Mammary epithelial cell (primary cell): ENCODE measurements at regions of chr11 and their contacts with region 1.

Region 1: GRCh38 chr11:111878849-111879636 is at the starts of genes CFAP68 and FDXACB1:
- DNase-seq: peak; percentile 98
- H3K4me3 ChIP-seq: peak within 1 kb of the TSS; percentile 69 to 91 (median 73)
- H3K27ac ChIP-seq: peak within 1 kb of the TSS; percentile 99
- H3K4me1 ChIP-seq: peaks cover 8% of the 10 kb centered on the region
- H3K27me3 ChIP-seq: no peaks in the 10 kb centered on the region
- CTCF ChIP-seq: peak; percentile 90 to 95
- total RNA-seq, gene CFAP68: 12.5 to 23.7 TPM
- total RNA-seq, gene FDXACB1: 0.96 to 2.3 TPM

Region 2: DNA sequence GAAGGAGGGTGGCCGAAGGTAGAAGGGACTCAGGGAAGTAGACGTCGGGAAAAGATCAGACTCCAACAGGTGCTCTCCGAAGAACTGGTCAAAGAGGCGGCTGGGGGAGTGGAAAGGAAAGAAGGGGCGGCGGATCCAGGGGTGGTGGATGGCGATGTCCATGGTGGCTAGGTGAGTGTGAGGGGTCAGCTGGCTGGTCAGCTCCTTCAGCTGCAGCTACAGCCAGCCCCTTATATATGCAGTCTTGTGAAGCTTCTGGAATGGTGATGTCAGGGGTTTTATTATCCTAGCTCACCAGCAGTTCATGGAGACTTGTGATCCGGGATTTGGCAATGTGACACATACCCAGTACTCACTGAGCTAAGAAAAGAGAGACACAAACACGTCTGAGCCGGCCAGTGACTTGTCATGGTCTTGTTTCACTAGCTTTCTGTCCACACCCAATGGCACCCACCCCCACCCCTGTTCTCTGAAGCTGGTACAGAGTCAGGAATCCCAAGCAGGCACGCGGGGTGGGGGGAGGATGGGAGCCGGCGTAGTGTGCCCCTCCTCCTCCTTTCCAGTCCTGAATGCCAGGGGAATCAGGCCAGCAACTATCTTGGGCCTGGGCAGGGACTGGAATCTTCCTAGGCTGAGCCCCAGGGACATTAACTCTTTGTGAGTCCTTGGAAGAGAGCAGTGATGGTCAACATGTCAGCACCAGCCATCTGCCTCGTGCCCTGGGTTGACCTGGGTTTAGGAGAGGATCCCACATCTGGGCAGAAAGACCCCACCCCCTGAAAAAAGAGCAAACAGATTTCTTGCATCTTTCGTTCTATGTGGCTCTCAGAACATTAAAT is 32.7 kb after region 1 on chr11 and contains the start of gene CRYAB:
- CTCF ChIA-PET with region 1: no interaction called
- dilution Hi-C with region 1: no loop called
- in situ Hi-C with region 1: loop called in 1 of 2 experiments (anchors 5 kb)
- intact Hi-C with region 1: loop called (anchors 2 kb)
- DNase-seq: peak; percentile 93
- H3K4me3 ChIP-seq: peak within 1 kb of the TSS; percentile 3 to 56 (median 6)
- H3K27ac ChIP-seq: peak within 1 kb of the TSS; percentile 38
- H3K4me1 ChIP-seq: peaks cover 26% of the 10 kb centered on the region
- H3K27me3 ChIP-seq: no peaks in the 10 kb centered on the region
- CTCF ChIP-seq: no peak
- total RNA-seq, gene CRYAB: 12.7 to 110 TPM

Region 3: GRCh38 chr11:111926505-111927391 is 47.7 kb after region 1 on chr11:
- CTCF ChIA-PET with region 1: no interaction called
- dilution Hi-C with region 1: loop called (anchors 5 kb)
- in situ Hi-C with region 1: no loop called
- intact Hi-C with region 1: loop called (anchors 1 kb)
- DNase-seq: peak; percentile 94
- H3K4me3 ChIP-seq: peak overlapping the region; percentile 26 to 48 (median 37)
- H3K27ac ChIP-seq: peak overlapping the region; percentile 67
- H3K4me1 ChIP-seq: peaks cover 10% of the 10 kb centered on the region
- H3K27me3 ChIP-seq: no peaks in the 10 kb centered on the region
- CTCF ChIP-seq: peak in 1 of 2 donors; percentile 3

Region 4: GRCh38 chr11:111932611-111932950 is 53.5 kb after region 1 on chr11:
- CTCF ChIA-PET with region 1: no interaction called
- dilution Hi-C with region 1: loop called (anchors 5 kb)
- in situ Hi-C with region 1: no loop called
- intact Hi-C with region 1: loop called (anchors 1 kb)
- DNase-seq: no peak
- H3K4me3 ChIP-seq: no peak overlapping the region
- H3K27ac ChIP-seq: no peak overlapping the region
- H3K4me1 ChIP-seq: peaks cover 10% of the 10 kb centered on the region
- H3K27me3 ChIP-seq: no peaks in the 10 kb centered on the region
- CTCF ChIP-seq: no peak

Region 5: GRCh38 chr11:111982019-111982464 is 103.0 kb after region 1 on chr11:
- CTCF ChIA-PET with region 1: interaction called, 4 read pairs
- dilution Hi-C with region 1: no loop called
- in situ Hi-C with region 1: loop called (anchors 5 to 10 kb)
- intact Hi-C with region 1: loop called (anchors 1 kb)
- DNase-seq: peak; percentile 59
- H3K4me3 ChIP-seq: no peak overlapping the region
- H3K27ac ChIP-seq: no peak overlapping the region
- H3K4me1 ChIP-seq: peaks cover 21% of the 10 kb centered on the region
- H3K27me3 ChIP-seq: no peaks in the 10 kb centered on the region
- CTCF ChIP-seq: peak; percentile 76 to 86

Region 6: DNA sequence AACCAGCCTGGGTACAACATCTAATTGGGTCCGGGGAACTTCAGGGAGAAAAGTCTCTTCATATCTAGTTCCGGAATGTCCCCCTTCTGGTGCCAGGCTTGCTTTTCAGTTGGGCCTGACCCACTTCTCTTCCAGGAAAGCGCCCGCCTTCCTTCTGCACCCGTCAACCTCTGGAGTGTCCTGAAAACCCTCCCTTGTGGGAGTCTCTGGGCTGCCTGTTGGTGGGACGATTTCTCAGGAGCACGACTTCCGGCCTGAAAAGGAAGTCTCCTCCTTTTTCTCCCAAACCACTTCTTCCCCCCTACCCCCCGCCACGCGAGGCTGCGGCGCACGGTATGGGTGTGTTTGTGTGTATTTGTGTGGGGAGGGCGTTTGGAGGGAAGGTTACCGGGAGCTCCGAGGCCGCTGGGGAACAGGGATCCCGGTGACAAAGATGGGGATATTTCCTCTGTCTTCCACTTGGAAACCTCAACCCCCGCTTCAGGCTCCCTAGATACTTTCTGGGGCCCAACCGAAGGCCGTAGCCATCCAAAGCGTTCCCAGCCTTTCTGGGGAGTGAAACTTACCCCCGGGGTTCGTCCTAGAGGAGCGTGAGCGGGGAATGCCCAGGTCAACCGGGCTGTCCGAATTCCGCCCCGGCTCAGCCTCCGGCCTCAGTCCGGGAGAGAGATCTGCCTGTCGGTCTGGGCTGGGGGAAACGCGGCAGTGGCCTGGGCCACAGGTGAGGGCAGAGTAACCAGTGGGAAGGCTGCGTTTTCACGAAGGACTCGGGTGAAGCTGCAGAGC is 195.2 kb after region 1 on chr11 and contains the start of gene NKAPD1:
- CTCF ChIA-PET with region 1: no interaction called
- dilution Hi-C with region 1: no loop called
- in situ Hi-C with region 1: loop called in 1 of 2 experiments (anchors 10 kb)
- intact Hi-C with region 1: loop called (anchors 1 kb)
- DNase-seq: peak; percentile 86
- H3K4me3 ChIP-seq: peak within 1 kb of the TSS; percentile 62 to 94 (median 81)
- H3K27ac ChIP-seq: peak within 1 kb of the TSS; percentile 87
- H3K4me1 ChIP-seq: peaks cover 12% of the 10 kb centered on the region
- H3K27me3 ChIP-seq: no peaks in the 10 kb centered on the region
- CTCF ChIP-seq: peak in 1 of 2 donors; percentile 9
- total RNA-seq, gene NKAPD1: 16.9 to 17.3 TPM

Region 7: DNA sequence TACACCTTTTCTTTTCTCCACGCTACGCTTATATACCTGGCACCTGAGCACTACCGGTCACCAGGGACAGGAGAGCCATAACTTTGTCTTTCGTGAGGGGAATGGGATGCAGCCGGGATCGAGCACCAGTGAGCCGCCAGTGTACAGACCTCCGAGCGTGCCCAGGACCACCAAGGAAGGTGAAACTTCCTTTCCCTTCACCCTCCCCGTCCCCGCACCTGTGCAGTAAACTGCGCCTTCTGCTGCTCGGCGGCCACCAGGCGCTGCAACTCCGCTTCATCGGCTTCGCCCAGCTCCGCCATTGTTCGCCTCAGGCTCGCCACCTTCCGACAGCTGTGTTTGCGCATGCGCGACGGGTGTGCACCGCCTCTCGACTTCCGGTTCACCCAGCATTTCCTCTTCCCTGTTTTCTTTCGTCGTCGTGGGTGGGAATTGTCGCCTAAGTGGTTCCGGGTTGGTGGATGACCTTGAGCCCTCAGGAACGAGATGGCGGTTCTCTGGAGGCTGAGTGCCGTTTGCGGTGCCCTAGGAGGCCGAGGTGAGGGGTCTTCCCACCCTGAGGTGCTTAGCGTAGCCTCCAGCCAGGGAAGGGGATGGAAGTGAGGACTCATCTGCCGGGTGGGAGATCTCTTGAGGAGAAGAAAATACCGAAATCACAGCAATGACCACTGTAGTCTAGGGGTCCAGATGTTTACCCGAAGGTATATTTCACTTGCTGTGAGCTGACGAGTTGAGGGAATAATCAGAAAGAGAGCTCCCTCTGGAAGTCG is 207.6 kb after region 1 on chr11 and contains the starts of genes SDHD and TIMM8B:
- CTCF ChIA-PET with region 1: no interaction called
- dilution Hi-C with region 1: no loop called
- in situ Hi-C with region 1: no loop called
- intact Hi-C with region 1: loop called (anchors 2 kb)
- DNase-seq: peak; percentile 95
- H3K4me3 ChIP-seq: peak within 1 kb of the TSS; percentile 93 to 98 (median 93)
- H3K27ac ChIP-seq: peak within 1 kb of the TSS; percentile 80
- H3K4me1 ChIP-seq: peaks cover 10% of the 10 kb centered on the region
- H3K27me3 ChIP-seq: no peaks in the 10 kb centered on the region
- CTCF ChIP-seq: peak in 1 of 2 donors; percentile 46
- total RNA-seq, gene SDHD: 57.7 to 58.5 TPM
- total RNA-seq, gene TIMM8B: 21.8 to 58.7 TPM